Caco-2 (cell line): ENCODE measurements at regions of chr14 and their contacts with region 1.

Region 1: GRCh38 chr14:67557126-67557525 is 24.0 kb downstream of the PLEKHH1 start:
- DNase-seq: peak; percentile 51 to 80
- H3K4me3 ChIP-seq: no peak overlapping the region
- H3K4me3 Mint-ChIP-seq: no peak overlapping the region
- H3K27ac Mint-ChIP-seq: peak overlapping the region; percentile 74
- H3K4me1 ChIP-seq: peaks cover 17% of the 10 kb centered on the region
- H3K4me1 Mint-ChIP-seq: peaks cover 8% of the 10 kb centered on the region
- H3K27me3 ChIP-seq: no peaks in the 10 kb centered on the region
- H3K27me3 Mint-ChIP-seq: no peaks in the 10 kb centered on the region
- CTCF ChIP-seq: no peak

Region 2: DNA sequence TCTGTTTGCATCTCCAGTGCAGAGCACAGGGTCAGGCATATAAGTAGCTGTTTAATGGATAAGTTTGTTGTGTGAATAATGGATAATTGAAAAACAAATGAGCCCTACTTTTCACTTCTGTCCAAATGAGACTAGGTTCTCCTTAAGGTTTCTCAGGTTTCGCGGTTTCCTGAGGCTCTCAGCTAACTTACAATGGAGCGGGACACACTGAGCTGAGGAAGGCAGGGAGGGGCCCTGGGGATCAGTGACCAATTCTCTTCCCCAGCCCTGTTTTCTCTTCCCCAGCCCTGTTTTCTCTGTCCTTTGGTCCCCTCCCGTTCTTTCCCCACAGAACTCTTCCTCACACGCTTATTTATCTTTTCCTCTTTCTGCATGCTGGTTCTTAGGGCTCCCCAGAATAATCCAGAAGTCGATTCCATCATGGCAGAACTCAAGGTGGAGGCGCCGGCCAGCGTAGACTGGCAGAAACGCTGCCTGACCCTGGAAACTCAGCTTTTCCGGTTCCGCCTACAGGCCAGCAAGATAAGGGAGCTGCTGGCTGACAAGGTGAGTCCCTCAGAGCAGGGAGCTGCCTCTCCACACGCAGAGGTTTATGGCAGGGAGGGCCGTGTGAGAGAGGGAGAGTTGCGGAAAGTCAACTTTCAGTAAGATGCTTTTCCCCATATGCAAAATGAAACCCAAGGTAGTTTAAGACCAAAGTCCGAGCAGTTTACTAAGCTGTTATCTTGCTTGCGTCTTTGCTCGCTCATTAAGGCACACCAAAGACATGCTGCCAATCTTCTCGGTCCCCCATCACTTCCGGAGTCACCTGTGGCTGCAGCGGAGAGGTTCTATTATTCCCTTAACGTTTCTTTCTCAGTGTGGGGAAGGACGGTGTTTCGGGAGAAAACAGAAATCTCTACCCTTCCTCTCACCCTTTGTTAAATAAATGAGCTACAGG is 15.4 kb before region 1 on chr14:
- CTCF ChIA-PET with region 1: interaction called, 8 read pairs
- POLR2A ChIA-PET with region 1: interaction called, 3 read pairs
- intact Hi-C with region 1: loop called (anchors 1 kb)
- DNase-seq: peak; percentile 83 to 91
- H3K4me3 ChIP-seq: peak overlapping the region; percentile 37
- H3K4me3 Mint-ChIP-seq: peak overlapping the region; percentile 84
- H3K27ac Mint-ChIP-seq: peak overlapping the region; percentile 95
- H3K4me1 ChIP-seq: peaks cover 7% of the 10 kb centered on the region; the same call in 1 of the 2 replicates
- H3K4me1 Mint-ChIP-seq: peaks cover 7% of the 10 kb centered on the region
- H3K27me3 ChIP-seq: no peaks in the 10 kb centered on the region
- H3K27me3 Mint-ChIP-seq: no peaks in the 10 kb centered on the region
- CTCF ChIP-seq: no peak